ENCODE measurements at regions of chr15 and their contacts with region 1.

Region 1: GRCh38 chr15:31352911-31353811 is 26.5 kb downstream of the KLF13 start:
- DNase-seq: peak; percentile 29 to 41 (median 32)
- H3K4me3 ChIP-seq: peak overlapping the region in 2 of 3 experiments; percentile 4 to 60
- H3K4me3 Mint-ChIP-seq: peak overlapping the region; percentile 64 to 80
- H3K27ac ChIP-seq: peak overlapping the region; percentile 82 to 88
- H3K27ac Mint-ChIP-seq: peak overlapping the region; percentile 90 to 95 (median 91)
- H3K4me1 ChIP-seq: peaks cover 85 to 95% of the 10 kb centered on the region in 2 donors
- H3K4me1 Mint-ChIP-seq: peaks cover 98% of the 10 kb centered on the region
- H3K27me3 ChIP-seq: no peaks in the 10 kb centered on the region
- H3K27me3 Mint-ChIP-seq: no peaks in the 10 kb centered on the region
- CTCF ChIP-seq: no peak

Region 2: DNA sequence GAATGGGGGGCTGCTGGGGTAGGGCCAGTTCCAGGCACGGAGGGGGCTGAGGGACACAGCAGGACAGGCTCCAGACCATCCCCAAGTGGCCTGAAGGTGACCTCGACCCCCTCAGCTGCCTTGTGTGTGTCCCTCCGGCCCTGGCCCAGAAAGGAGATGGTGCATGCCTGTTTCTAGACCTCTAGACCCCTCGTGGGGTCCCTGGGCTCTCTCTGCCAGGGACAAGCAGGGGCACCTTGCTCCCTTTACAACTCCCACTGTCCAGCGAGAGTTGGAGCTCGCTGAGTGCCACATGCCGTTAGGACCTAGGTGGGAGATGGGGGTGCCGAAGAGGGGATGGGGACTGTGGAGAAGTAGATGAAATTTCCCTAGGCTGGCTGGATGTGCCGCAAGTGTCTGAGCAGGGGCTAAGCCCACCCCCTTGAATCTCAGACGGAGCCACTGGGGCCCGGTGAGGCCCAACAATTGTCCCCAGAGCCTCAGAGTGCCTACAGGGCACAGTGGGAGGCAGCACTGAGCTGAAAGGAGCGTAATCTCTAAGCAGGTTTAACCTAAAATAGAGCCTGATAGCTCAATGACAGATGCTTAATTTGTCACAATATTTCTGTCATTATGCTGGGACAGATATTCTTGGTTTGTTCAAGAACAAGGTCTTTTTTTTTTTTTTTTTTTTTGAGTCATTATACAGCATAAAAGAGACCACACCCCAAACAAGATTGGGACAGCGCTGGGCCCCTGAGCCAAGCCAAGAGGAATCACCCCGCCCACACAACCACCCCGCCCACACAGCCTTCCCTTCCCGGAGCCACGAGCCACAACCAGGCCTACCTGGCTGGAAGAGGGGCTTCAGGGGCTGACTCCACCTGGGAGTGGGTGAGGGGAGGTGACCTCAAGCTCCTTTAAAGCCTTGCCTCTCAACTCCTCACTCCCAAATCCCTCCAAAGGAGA is 50.1 kb before region 1 on chr15:
- intact Hi-C with region 1: no loop called
- DNase-seq: peak; percentile 54 to 66 (median 65)
- H3K4me3 ChIP-seq: peak overlapping the region in 1 of 3 experiments; percentile 32
- H3K4me3 Mint-ChIP-seq: no peak overlapping the region
- H3K27ac ChIP-seq: peak overlapping the region; percentile 32 to 70
- H3K27ac Mint-ChIP-seq: peak overlapping the region in 5 of 7 donors; percentile 20 to 83 (median 63)
- H3K4me1 ChIP-seq: peaks cover 17 to 32% of the 10 kb centered on the region in 2 donors
- H3K4me1 Mint-ChIP-seq: peaks cover 37% of the 10 kb centered on the region
- H3K27me3 ChIP-seq: no peaks in the 10 kb centered on the region
- H3K27me3 Mint-ChIP-seq: peaks cover 1 to 7% (median 2%) of the 10 kb centered on the region in 3 donors
- CTCF ChIP-seq: peak; percentile 30

Region 3: GRCh38 chr15:31391687-31392671 is 38.8 kb after region 1 on chr15:
- intact Hi-C with region 1: loop called in 1 of 2 experiments (anchors 5 kb)
- DNase-seq: peak; percentile 84 to 88 (median 88)
- H3K4me3 ChIP-seq: peak overlapping the region; percentile 37 to 77 (median 47)
- H3K4me3 Mint-ChIP-seq: peak overlapping the region; percentile 83 to 93
- H3K27ac ChIP-seq: peak overlapping the region in 1 of 2 donors; percentile 41
- H3K27ac Mint-ChIP-seq: peak overlapping the region in 5 of 7 donors; percentile 50 to 80 (median 55)
- H3K4me1 ChIP-seq: peaks cover 17 to 24% of the 10 kb centered on the region in 2 donors
- H3K4me1 Mint-ChIP-seq: peaks cover 26% of the 10 kb centered on the region
- H3K27me3 ChIP-seq: peaks cover 11 to 35% of the 10 kb centered on the region in 2 donors
- H3K27me3 Mint-ChIP-seq: peaks cover 33 to 59% (median 52%) of the 10 kb centered on the region in 3 donors
- CTCF ChIP-seq: no peak

Measured in CD14-positive monocyte (primary cell).